Caco-2 (cell line): ENCODE measurements at regions of chr5 and their contacts with region 1.

Region 1: GRCh38 chr5:174045470-174046025 is at the start of gene NSG2:
- DNase-seq: peak; percentile 92
- H3K4me3 ChIP-seq: no peak within 1 kb of the TSS
- H3K4me3 Mint-ChIP-seq: no peak within 1 kb of the TSS
- H3K27ac Mint-ChIP-seq: no peak within 1 kb of the TSS
- H3K4me1 ChIP-seq: no peaks in the 10 kb centered on the region
- H3K4me1 Mint-ChIP-seq: no peaks in the 10 kb centered on the region
- H3K27me3 ChIP-seq: no peaks in the 10 kb centered on the region; the same call in 1 of the 2 replicates
- H3K27me3 Mint-ChIP-seq: peaks cover 14% of the 10 kb centered on the region
- CTCF ChIP-seq: peak; percentile 86 to 98
- total RNA-seq, gene NSG2: not detected in 2 replicates

Region 2: GRCh38 chr5:174159327-174160247 is 114.0 kb after region 1 on chr5:
- CTCF ChIA-PET with region 1: no interaction called
- POLR2A ChIA-PET with region 1: no interaction called
- intact Hi-C with region 1: no loop called
- DNase-seq: peak; percentile 38 to 60
- H3K4me3 ChIP-seq: no peak overlapping the region
- H3K4me3 Mint-ChIP-seq: no peak overlapping the region
- H3K27ac Mint-ChIP-seq: no peak overlapping the region
- H3K4me1 ChIP-seq: no peaks in the 10 kb centered on the region
- H3K4me1 Mint-ChIP-seq: no peaks in the 10 kb centered on the region
- H3K27me3 ChIP-seq: no peaks in the 10 kb centered on the region
- H3K27me3 Mint-ChIP-seq: peaks cover 10% of the 10 kb centered on the region
- CTCF ChIP-seq: no peak

Region 3: GRCh38 chr5:174235221-174236011 is 189.9 kb after region 1 on chr5:
- CTCF ChIA-PET with region 1: no interaction called
- POLR2A ChIA-PET with region 1: no interaction called
- intact Hi-C with region 1: no loop called
- DNase-seq: no peak
- H3K4me3 ChIP-seq: no peak overlapping the region
- H3K4me3 Mint-ChIP-seq: no peak overlapping the region
- H3K27ac Mint-ChIP-seq: no peak overlapping the region
- H3K4me1 ChIP-seq: no peaks in the 10 kb centered on the region
- H3K4me1 Mint-ChIP-seq: no peaks in the 10 kb centered on the region
- H3K27me3 ChIP-seq: no peaks in the 10 kb centered on the region
- H3K27me3 Mint-ChIP-seq: peaks cover 16% of the 10 kb centered on the region
- CTCF ChIP-seq: no peak

Region 4: DNA sequence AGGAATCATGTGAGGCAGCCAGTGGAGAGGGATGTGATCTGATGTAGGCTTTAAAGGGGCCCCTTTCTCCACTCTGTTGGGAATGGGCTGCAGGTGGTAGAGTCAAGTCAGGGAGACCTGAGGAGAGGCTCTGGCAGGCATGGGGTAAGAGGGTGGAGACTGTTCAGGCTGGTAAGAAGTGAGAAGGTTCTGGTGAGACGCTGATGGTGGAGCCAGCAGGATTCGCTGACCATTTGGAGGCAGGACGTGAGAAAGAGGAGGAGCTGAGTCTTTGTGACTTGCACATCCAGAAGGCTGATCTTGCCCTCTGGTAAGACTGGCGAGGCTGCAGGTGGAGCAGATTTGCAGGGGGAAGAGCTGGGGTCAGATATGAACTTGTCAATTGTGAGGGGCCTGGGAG is 247.9 kb after region 1 on chr5:
- CTCF ChIA-PET with region 1: no interaction called
- POLR2A ChIA-PET with region 1: no interaction called
- intact Hi-C with region 1: no loop called
- DNase-seq: no peak
- H3K4me3 ChIP-seq: no peak overlapping the region
- H3K4me3 Mint-ChIP-seq: no peak overlapping the region
- H3K27ac Mint-ChIP-seq: no peak overlapping the region
- H3K4me1 ChIP-seq: no peaks in the 10 kb centered on the region
- H3K4me1 Mint-ChIP-seq: no peaks in the 10 kb centered on the region
- H3K27me3 ChIP-seq: no peaks in the 10 kb centered on the region
- H3K27me3 Mint-ChIP-seq: peaks cover 11% of the 10 kb centered on the region
- CTCF ChIP-seq: no peak

Region 5: GRCh38 chr5:174306345-174307030 is 260.9 kb after region 1 on chr5:
- CTCF ChIA-PET with region 1: interaction called, 117 read pairs
- POLR2A ChIA-PET with region 1: interaction called, 5 read pairs
- intact Hi-C with region 1: no loop called
- DNase-seq: no peak
- H3K4me3 ChIP-seq: no peak overlapping the region
- H3K4me3 Mint-ChIP-seq: no peak overlapping the region
- H3K27ac Mint-ChIP-seq: no peak overlapping the region
- H3K4me1 ChIP-seq: 0 out of 2 replicates have a peak, but pooled peaks cover under 1% of the 10 kb centered on the region
- H3K4me1 Mint-ChIP-seq: no peaks in the 10 kb centered on the region
- H3K27me3 ChIP-seq: no peaks in the 10 kb centered on the region; the same call in 1 of the 2 replicates
- H3K27me3 Mint-ChIP-seq: peaks cover 41% of the 10 kb centered on the region
- CTCF ChIP-seq: no peak

Region 6: GRCh38 chr5:174311531-174312269 is 266.2 kb after region 1 on chr5:
- CTCF ChIA-PET with region 1: interaction called, 117 read pairs
- POLR2A ChIA-PET with region 1: interaction called, 5 read pairs
- intact Hi-C with region 1: loop called (anchors 1 kb)
- DNase-seq: peak; percentile 64 to 85
- H3K4me3 ChIP-seq: peak overlapping the region; percentile 32
- H3K4me3 Mint-ChIP-seq: peak overlapping the region; percentile 27
- H3K27ac Mint-ChIP-seq: no peak overlapping the region
- H3K4me1 ChIP-seq: peaks cover 4% of the 10 kb centered on the region; the same call in 1 of the 2 replicates
- H3K4me1 Mint-ChIP-seq: no peaks in the 10 kb centered on the region
- H3K27me3 ChIP-seq: peaks cover 2% of the 10 kb centered on the region
- H3K27me3 Mint-ChIP-seq: peaks cover 25% of the 10 kb centered on the region
- CTCF ChIP-seq: peak; percentile 82 to 84

Region 7: GRCh38 chr5:174317259-174317894 is 271.8 kb after region 1 on chr5:
- CTCF ChIA-PET with region 1: interaction called, 117 read pairs
- POLR2A ChIA-PET with region 1: no interaction called
- intact Hi-C with region 1: loop called (anchors 1 kb)
- DNase-seq: peak; percentile 66 to 72
- H3K4me3 ChIP-seq: no peak overlapping the region
- H3K4me3 Mint-ChIP-seq: no peak overlapping the region
- H3K27ac Mint-ChIP-seq: no peak overlapping the region
- H3K4me1 ChIP-seq: no peaks in the 10 kb centered on the region
- H3K4me1 Mint-ChIP-seq: no peaks in the 10 kb centered on the region
- H3K27me3 ChIP-seq: peaks cover 2% of the 10 kb centered on the region
- H3K27me3 Mint-ChIP-seq: peaks cover 29% of the 10 kb centered on the region
- CTCF ChIP-seq: peak; percentile 93